Activated B cell treated with CpG ODN at 0.5 μM for 24 hours (primary cell): ENCODE measurements at regions of chr1 and their contacts with region 1.

Region 1: GRCh38 chr1:9842781-9843577 is 19.2 kb upstream of the CLSTN1 start:
- DNase-seq: no peak
- ATAC-seq: no peak
- H3K4me3 Mint-ChIP-seq: no peak overlapping the region
- H3K27ac Mint-ChIP-seq: no peak overlapping the region
- H3K4me1 Mint-ChIP-seq: peaks cover 3% of the 10 kb centered on the region
- H3K27me3 Mint-ChIP-seq: no peaks in the 10 kb centered on the region
- CTCF ChIP-seq: no peak

Region 2: DNA sequence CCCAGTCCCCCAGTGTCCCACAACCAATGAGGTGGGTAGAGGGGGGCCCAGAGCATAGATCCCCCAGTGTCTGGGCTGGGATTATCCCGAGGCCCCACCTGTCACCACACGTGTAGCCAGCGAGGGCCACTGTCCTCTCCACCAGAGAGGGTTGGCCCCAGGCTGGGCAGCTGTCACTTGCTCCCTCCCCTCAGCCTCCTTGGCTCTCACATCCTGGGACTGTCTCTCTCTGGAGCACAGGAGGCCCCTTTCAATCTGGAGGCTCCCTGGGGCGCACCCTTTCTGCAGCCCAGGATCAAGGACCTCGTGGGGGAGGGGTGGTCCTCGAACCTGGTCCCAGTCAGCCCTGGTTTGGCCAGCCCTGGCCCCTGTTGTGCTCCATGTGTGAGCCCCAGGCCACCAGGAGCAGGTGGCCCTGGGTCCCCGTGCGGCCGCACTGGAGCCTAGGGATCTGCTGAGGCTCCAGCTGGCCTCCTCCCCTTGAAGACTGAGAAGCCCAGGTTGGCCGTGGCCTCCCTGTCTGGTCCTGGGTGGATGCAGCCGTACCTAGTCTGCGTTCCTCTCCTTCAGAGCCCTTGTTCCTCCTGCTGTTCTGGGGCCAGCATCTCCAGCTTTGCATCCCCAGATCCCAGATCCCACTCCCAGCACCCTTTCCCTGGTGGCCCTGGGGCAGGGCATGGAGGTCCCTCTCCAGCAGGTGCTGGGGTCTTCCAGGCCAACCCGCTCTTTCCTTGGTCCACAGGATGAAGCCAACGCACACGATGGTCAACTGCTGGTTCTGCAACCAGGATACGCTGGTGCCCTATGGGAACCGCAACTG is 247.6 kb before region 1 on chr1:
- CTCF ChIA-PET with region 1: no interaction called
- POLR2A ChIA-PET with region 1: interaction called, 10 read pairs
- intact Hi-C with region 1: no loop called
- DNase-seq: no peak
- ATAC-seq: no peak
- H3K4me3 Mint-ChIP-seq: no peak overlapping the region
- H3K27ac Mint-ChIP-seq: no peak overlapping the region
- H3K4me1 Mint-ChIP-seq: peaks cover 28% of the 10 kb centered on the region
- H3K27me3 Mint-ChIP-seq: no peaks in the 10 kb centered on the region
- CTCF ChIP-seq: no peak

Region 3: GRCh38 chr1:9705337-9706093 is 137.5 kb before region 1 on chr1:
- CTCF ChIA-PET with region 1: no interaction called
- POLR2A ChIA-PET with region 1: interaction called, 10 read pairs
- intact Hi-C with region 1: no loop called
- DNase-seq: no peak
- ATAC-seq: no peak
- H3K4me3 Mint-ChIP-seq: no peak overlapping the region
- H3K27ac Mint-ChIP-seq: peak overlapping the region; percentile 6
- H3K4me1 Mint-ChIP-seq: peaks cover 57% of the 10 kb centered on the region
- H3K27me3 Mint-ChIP-seq: no peaks in the 10 kb centered on the region
- CTCF ChIP-seq: no peak